B cell (primary cell): ENCODE measurements at regions of chr16 and their contacts with region 1.

Region 1: GRCh38 chr16:89217388-89218191 is at the start of gene ZNF778:
- DNase-seq: peak; percentile 92
- ATAC-seq: peak; percentile 85
- H3K4me3 ChIP-seq: peak within 1 kb of the TSS; percentile 80 to 92 (median 86)
- H3K4me3 Mint-ChIP-seq: peak within 1 kb of the TSS; percentile 80
- H3K27ac ChIP-seq: peak within 1 kb of the TSS; percentile 81 to 92
- H3K27ac Mint-ChIP-seq: peak within 1 kb of the TSS; percentile 80
- H3K4me1 ChIP-seq: peaks cover 12 to 17% of the 10 kb centered on the region in 2 donors
- H3K4me1 Mint-ChIP-seq: peaks cover 19% of the 10 kb centered on the region
- H3K27me3 ChIP-seq: no peaks in the 10 kb centered on the region
- H3K27me3 Mint-ChIP-seq: no peaks in the 10 kb centered on the region
- CTCF ChIP-seq: no peak
- total RNA-seq, gene ZNF778: 8.9 and 13.4 TPM in 2 replicates

Region 2: DNA sequence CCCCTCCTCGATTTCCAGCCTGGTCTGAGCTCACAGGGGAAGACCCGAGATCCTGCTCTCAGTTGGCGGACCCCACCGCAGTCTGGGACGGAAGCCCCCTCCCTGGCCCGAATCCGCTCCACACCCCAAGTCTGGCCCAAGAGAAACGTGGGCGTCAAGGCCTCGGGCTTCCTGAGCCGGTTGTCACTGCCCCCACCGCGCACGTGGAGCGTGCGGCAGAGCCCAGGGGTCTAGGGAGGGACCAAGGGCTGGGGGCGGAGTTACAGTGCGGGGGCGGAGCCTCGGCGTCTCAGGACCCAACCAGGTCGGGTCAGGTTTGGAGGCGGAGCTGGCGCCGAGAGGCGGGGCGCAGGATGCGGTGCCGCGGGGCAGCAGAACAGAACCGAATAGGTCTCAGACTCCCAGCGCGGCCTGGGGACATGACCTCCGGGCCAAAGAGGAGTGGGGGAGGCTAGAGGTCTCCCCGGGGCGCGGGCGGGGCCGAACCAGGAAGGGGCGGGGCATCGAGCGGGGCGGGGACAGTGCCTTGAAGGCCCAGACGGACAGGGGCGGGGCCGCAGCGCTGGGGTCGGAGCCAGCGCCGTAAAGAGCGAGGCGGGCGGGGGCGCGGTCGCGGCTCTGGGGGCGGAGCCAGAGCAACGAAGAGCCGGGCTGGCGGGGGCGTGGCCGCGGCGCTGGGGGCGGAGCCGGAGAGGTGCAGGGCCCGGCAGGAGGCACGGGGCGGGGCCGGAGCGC is 764.9 kb before region 1 on chr16:
- CTCF ChIA-PET with region 1: no interaction called
- POLR2A ChIA-PET with region 1: no interaction called
- intact Hi-C with region 1: loop called (anchors 5 kb)
- DNase-seq: peak; percentile 98
- ATAC-seq: peak; percentile 74
- H3K4me3 ChIP-seq: peak overlapping the region in 4 of 5 experiments; percentile 47 to 86 (median 60)
- H3K4me3 Mint-ChIP-seq: peak overlapping the region; percentile 84
- H3K27ac ChIP-seq: peak overlapping the region in 1 of 2 donors; percentile 67
- H3K27ac Mint-ChIP-seq: peak overlapping the region; percentile 88
- H3K4me1 ChIP-seq: peaks cover 51 to 61% of the 10 kb centered on the region in 2 donors
- H3K4me1 Mint-ChIP-seq: peaks cover 62% of the 10 kb centered on the region
- H3K27me3 ChIP-seq: peaks cover 0 to 11% (median 0%) of the 10 kb centered on the region in 4 experiments
- H3K27me3 Mint-ChIP-seq: no peaks in the 10 kb centered on the region
- CTCF ChIP-seq: no peak

Region 3: DNA sequence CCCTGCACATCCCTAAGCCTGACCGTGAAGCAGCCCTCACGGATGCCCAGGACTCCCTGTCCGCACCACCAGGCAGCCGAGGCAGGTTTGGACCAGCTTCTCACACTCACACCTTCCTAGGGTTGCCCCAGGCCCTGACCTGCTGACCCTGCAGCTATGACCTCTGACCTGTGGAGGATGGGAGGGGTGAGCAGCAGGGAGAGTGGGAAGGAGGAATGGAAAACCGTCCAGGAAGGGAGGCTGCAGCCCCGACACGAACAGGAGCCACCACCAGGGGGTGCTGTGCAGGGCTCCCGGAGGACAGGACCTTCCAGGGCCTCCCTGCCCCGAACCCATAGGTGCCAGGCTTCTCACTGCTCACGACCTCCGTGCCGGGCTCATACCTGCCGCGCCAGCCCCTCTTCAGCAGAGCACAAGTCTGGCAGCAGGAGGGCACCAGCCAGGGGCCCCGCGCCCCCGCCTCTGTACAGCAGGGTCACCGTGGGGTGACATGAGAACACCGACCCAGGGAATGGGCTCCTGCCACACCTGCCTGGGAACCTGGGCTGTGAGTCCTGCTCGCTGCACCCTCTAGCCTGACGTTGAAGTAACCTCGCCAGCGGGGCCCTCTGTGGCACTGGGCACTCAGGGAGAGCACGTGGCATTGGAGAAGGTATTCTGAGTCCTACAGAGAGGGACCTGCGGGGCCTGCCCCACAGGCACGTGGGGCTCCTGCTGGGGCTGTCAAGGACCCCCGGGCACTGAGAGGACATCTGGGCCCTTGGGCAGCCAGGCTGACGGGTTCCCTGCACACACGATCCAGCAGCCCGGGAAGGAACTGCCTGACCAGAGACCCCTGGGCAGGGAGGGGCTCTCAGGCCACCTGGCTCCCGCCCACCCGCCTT is 473.7 kb before region 1 on chr16:
- CTCF ChIA-PET with region 1: interaction called, 3 read pairs
- POLR2A ChIA-PET with region 1: interaction called, 8 read pairs
- intact Hi-C with region 1: loop called (anchors 2 kb)
- DNase-seq: peak; percentile 75
- ATAC-seq: no peak
- H3K4me3 ChIP-seq: no peak overlapping the region
- H3K4me3 Mint-ChIP-seq: peak overlapping the region; percentile 34
- H3K27ac ChIP-seq: no peak overlapping the region
- H3K27ac Mint-ChIP-seq: peak overlapping the region; percentile 78
- H3K4me1 ChIP-seq: peaks cover 47 to 59% of the 10 kb centered on the region in 2 donors
- H3K4me1 Mint-ChIP-seq: peaks cover 50% of the 10 kb centered on the region
- H3K27me3 ChIP-seq: no peaks in the 10 kb centered on the region
- H3K27me3 Mint-ChIP-seq: no peaks in the 10 kb centered on the region
- CTCF ChIP-seq: peak; percentile 93

Region 4: GRCh38 chr16:88811769-88812512 is 405.6 kb before region 1 on chr16 and contains the start of gene APRT:
- CTCF ChIA-PET with region 1: interaction called, 6 read pairs
- POLR2A ChIA-PET with region 1: interaction called, 6 read pairs
- intact Hi-C with region 1: loop called (anchors 1 kb)
- DNase-seq: peak; percentile 97
- ATAC-seq: peak; percentile 87
- H3K4me3 ChIP-seq: peak within 1 kb of the TSS; percentile 45 to 90 (median 77)
- H3K4me3 Mint-ChIP-seq: peak within 1 kb of the TSS; percentile 98
- H3K27ac ChIP-seq: peak within 1 kb of the TSS; percentile 61 to 65
- H3K27ac Mint-ChIP-seq: peak within 1 kb of the TSS; percentile 99
- H3K4me1 ChIP-seq: peaks cover 11 to 27% of the 10 kb centered on the region in 2 donors
- H3K4me1 Mint-ChIP-seq: peaks cover 19% of the 10 kb centered on the region
- H3K27me3 ChIP-seq: no peaks in the 10 kb centered on the region
- H3K27me3 Mint-ChIP-seq: no peaks in the 10 kb centered on the region
- CTCF ChIP-seq: no peak
- total RNA-seq, gene APRT: 111 and 124 TPM in 2 replicates

Region 5: GRCh38 chr16:88925101-88925887 is 292.3 kb before region 1 on chr16:
- CTCF ChIA-PET with region 1: no interaction called
- POLR2A ChIA-PET with region 1: no interaction called
- intact Hi-C with region 1: loop called (anchors 1 kb)
- DNase-seq: peak; percentile 82
- ATAC-seq: peak; percentile 96
- H3K4me3 ChIP-seq: no peak overlapping the region
- H3K4me3 Mint-ChIP-seq: no peak overlapping the region
- H3K27ac ChIP-seq: no peak overlapping the region
- H3K27ac Mint-ChIP-seq: peak overlapping the region; percentile 78
- H3K4me1 ChIP-seq: peaks cover 51 to 63% of the 10 kb centered on the region in 2 donors
- H3K4me1 Mint-ChIP-seq: peaks cover 60% of the 10 kb centered on the region
- H3K27me3 ChIP-seq: no peaks in the 10 kb centered on the region
- H3K27me3 Mint-ChIP-seq: no peaks in the 10 kb centered on the region
- CTCF ChIP-seq: peak; percentile 66

Region 6: GRCh38 chr16:88941913-88942909 is 275.4 kb before region 1 on chr16:
- CTCF ChIA-PET with region 1: interaction called, 3 read pairs
- POLR2A ChIA-PET with region 1: no interaction called
- intact Hi-C with region 1: loop called (anchors 1 kb)
- DNase-seq: peak; percentile 85
- ATAC-seq: peak; percentile 67
- H3K4me3 ChIP-seq: peak overlapping the region in 4 of 5 experiments; percentile 22 to 46 (median 30)
- H3K4me3 Mint-ChIP-seq: peak overlapping the region; percentile 78
- H3K27ac ChIP-seq: no peak overlapping the region
- H3K27ac Mint-ChIP-seq: peak overlapping the region; percentile 81
- H3K4me1 ChIP-seq: peaks cover 29 to 39% of the 10 kb centered on the region in 2 donors
- H3K4me1 Mint-ChIP-seq: peaks cover 44% of the 10 kb centered on the region
- H3K27me3 ChIP-seq: no peaks in the 10 kb centered on the region
- H3K27me3 Mint-ChIP-seq: no peaks in the 10 kb centered on the region
- CTCF ChIP-seq: peak; percentile 86

Region 7: GRCh38 chr16:89171463-89172170 is 46.0 kb before region 1 on chr16 and contains the start of gene CDH15:
- CTCF ChIA-PET with region 1: interaction called, 10 read pairs
- POLR2A ChIA-PET with region 1: interaction called, 3 read pairs
- intact Hi-C with region 1: loop called (anchors 1 kb)
- DNase-seq: peak; percentile 97
- ATAC-seq: peak; percentile 95
- H3K4me3 ChIP-seq: peak within 1 kb of the TSS in 4 of 5 experiments; percentile 31 to 51 (median 38)
- H3K4me3 Mint-ChIP-seq: peak within 1 kb of the TSS; percentile 59
- H3K27ac ChIP-seq: no peak within 1 kb of the TSS
- H3K27ac Mint-ChIP-seq: peak within 1 kb of the TSS; percentile 62
- H3K4me1 ChIP-seq: peaks cover 28 to 40% of the 10 kb centered on the region in 2 donors
- H3K4me1 Mint-ChIP-seq: peaks cover 18% of the 10 kb centered on the region
- H3K27me3 ChIP-seq: peaks cover 0 to 31% (median 13%) of the 10 kb centered on the region in 4 experiments
- H3K27me3 Mint-ChIP-seq: peaks cover 4% of the 10 kb centered on the region
- CTCF ChIP-seq: no peak
- total RNA-seq, gene CDH15: not detected in 2 replicates

Region 8: GRCh38 chr16:89193021-89193575 is 24.5 kb before region 1 on chr16:
- CTCF ChIA-PET with region 1: no interaction called
- POLR2A ChIA-PET with region 1: no interaction called
- intact Hi-C with region 1: no loop called
- DNase-seq: peak; percentile 60
- ATAC-seq: peak; percentile 4
- H3K4me3 ChIP-seq: no peak overlapping the region
- H3K4me3 Mint-ChIP-seq: no peak overlapping the region
- H3K27ac ChIP-seq: no peak overlapping the region
- H3K27ac Mint-ChIP-seq: no peak overlapping the region
- H3K4me1 ChIP-seq: no peaks in the 10 kb centered on the region
- H3K4me1 Mint-ChIP-seq: peaks cover 3% of the 10 kb centered on the region
- H3K27me3 ChIP-seq: peaks cover 0 to 12% (median 0%) of the 10 kb centered on the region in 4 experiments
- H3K27me3 Mint-ChIP-seq: no peaks in the 10 kb centered on the region
- CTCF ChIP-seq: no peak

Region 9: GRCh38 chr16:89230255-89230654 is 12.7 kb after region 1 on chr16:
- CTCF ChIA-PET with region 1: no interaction called
- POLR2A ChIA-PET with region 1: no interaction called
- intact Hi-C with region 1: no loop called
- DNase-seq: no peak
- ATAC-seq: no peak
- H3K4me3 ChIP-seq: no peak overlapping the region
- H3K4me3 Mint-ChIP-seq: no peak overlapping the region
- H3K27ac ChIP-seq: no peak overlapping the region
- H3K27ac Mint-ChIP-seq: no peak overlapping the region
- H3K4me1 ChIP-seq: no peaks in the 10 kb centered on the region
- H3K4me1 Mint-ChIP-seq: no peaks in the 10 kb centered on the region
- H3K27me3 ChIP-seq: no peaks in the 10 kb centered on the region
- H3K27me3 Mint-ChIP-seq: no peaks in the 10 kb centered on the region
- CTCF ChIP-seq: no peak

Region 10: DNA sequence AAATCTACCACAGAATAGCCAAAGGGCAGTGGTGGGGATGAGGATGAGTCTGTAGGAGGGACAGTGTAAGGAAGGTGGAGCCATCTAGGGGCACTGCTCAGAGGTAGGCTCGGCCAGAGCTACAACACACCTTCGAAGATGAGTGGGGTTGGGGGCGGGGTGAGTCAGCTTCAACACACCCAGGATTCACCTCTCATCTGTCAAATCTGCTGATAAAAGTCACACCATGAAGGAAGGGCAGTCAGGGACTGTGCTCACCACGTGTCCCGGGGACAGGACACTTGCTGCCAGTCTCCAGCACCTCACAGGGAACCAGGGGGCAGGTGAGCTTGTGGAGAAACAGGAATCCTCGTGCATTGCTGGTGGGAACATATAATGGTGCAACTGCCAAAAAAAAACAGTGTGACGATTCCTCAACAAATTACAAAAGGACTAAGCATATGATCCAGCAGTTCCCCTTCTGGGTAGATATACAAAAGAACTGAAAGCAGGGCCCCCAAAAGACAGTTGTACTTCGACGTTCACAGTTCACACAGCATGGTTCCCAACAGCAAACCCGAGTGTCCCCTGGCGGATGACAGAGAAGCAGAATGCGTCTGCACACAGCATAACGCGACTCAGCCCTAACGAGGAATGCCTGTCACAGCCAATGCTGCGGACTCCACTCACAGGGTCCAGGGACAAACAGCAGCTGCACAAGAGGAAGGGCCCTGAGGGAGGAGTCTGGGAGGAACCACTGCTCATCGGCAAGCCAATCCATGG is 139.6 kb after region 1 on chr16:
- CTCF ChIA-PET with region 1: no interaction called
- POLR2A ChIA-PET with region 1: no interaction called
- intact Hi-C with region 1: no loop called
- DNase-seq: peak; percentile 52
- ATAC-seq: peak; percentile 25
- H3K4me3 ChIP-seq: no peak overlapping the region
- H3K4me3 Mint-ChIP-seq: peak overlapping the region; percentile 60
- H3K27ac ChIP-seq: no peak overlapping the region
- H3K27ac Mint-ChIP-seq: peak overlapping the region; percentile 67
- H3K4me1 ChIP-seq: peaks cover 56 to 59% of the 10 kb centered on the region in 2 donors
- H3K4me1 Mint-ChIP-seq: peaks cover 74% of the 10 kb centered on the region
- H3K27me3 ChIP-seq: no peaks in the 10 kb centered on the region
- H3K27me3 Mint-ChIP-seq: no peaks in the 10 kb centered on the region
- CTCF ChIP-seq: no peak